ENCODE measurements at regions of chr1 and their contacts with region 1.

Region 1: DNA sequence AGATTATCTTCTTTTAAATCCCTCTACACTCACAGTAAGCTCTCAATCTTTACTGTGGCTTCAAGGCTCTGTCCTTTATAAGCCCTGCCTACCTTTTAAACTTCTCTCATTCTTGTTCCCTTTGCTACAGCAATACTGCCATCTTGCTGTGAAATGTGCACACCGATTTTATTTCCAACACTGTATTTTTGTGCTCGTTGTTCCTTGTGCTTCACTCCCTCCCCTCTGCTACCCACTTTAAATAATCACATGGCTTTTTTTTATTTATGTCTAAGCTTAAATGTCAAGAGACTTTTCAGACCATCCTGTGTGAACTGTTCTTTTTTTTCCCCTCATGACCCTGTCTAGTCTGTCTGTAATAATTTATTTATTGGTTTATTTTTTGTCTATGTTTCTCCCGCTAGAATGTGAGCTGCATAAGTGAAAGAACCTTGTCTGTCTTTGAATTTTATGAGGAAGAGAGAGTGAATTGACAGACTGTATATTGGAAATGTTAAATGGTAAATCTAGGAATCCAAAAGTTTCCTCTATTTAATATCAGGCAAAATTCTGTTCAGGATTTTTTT is 45.7 kb downstream of the ABCD3 start:
- DNase-seq: peak; percentile 78
- ATAC-seq: peak; percentile 99
- H3K4me3 ChIP-seq: no peak overlapping the region
- H3K27ac ChIP-seq: no peak overlapping the region
- H3K4me1 ChIP-seq: no peaks in the 10 kb centered on the region
- H3K27me3 ChIP-seq: no peaks in the 10 kb centered on the region
- CTCF ChIP-seq: peak; percentile 87

Region 2: GRCh38 chr1:94247138-94248094 is 216.4 kb before region 1 on chr1:
- CTCF ChIA-PET with region 1: no interaction called
- POLR2A ChIA-PET with region 1: no interaction called
- intact Hi-C with region 1: loop called (anchors 10 kb)
- DNase-seq: peak; percentile 92
- ATAC-seq: peak; percentile 60
- H3K4me3 ChIP-seq: peak overlapping the region; percentile 96
- H3K27ac ChIP-seq: peak overlapping the region; percentile 92
- H3K4me1 ChIP-seq: peaks cover 41% of the 10 kb centered on the region
- H3K27me3 ChIP-seq: no peaks in the 10 kb centered on the region
- CTCF ChIP-seq: no peak

Region 3: DNA sequence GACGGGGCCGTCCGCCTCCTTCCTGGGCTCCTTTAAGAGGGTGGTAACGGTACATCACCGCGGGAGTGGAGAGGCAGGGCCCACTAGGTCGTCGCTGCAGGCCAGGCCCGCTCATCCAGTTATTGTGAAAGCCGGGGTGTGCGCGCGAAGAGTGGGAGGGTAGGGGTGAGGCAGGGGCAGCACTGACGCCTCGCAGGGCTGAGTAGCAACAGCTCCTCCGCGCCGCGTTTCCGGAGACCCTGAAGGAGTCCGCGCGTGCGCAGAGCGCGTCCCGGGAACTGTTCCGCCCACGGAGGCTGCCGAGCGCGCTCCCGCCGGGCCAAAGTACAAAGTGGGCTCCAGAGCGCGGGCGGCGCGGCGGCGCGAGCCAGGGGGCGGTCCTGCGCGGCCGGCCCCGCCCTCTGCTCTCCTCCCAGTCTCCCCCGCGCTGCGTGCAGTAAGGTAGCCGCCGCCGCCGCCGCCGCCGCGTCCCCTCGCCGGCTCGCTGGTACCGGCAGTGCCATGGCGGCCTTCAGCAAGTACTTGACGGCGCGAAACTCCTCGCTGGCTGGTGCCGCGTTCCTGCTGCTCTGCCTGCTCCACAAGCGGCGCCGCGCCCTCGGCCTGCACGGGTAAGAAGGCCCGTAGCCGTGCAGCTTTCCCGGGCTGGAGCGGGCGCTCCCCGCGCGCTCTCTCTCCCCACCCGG is 45.7 kb before region 1 on chr1 and contains the start of gene ABCD3:
- CTCF ChIA-PET with region 1: interaction called, 4 read pairs
- POLR2A ChIA-PET with region 1: no interaction called
- intact Hi-C with region 1: loop called (anchors 5 kb)
- DNase-seq: peak; percentile 97
- ATAC-seq: peak; percentile 83
- H3K4me3 ChIP-seq: peak within 1 kb of the TSS; percentile 85
- H3K27ac ChIP-seq: peak within 1 kb of the TSS; percentile 38
- H3K4me1 ChIP-seq: peaks cover 40% of the 10 kb centered on the region
- H3K27me3 ChIP-seq: no peaks in the 10 kb centered on the region
- CTCF ChIP-seq: no peak
- total RNA-seq, gene ABCD3: 31.7 and 36.3 TPM in 2 replicates

Measured in PC-3 (cell line).